HCT116 (cell line): ENCODE measurements at regions of chr14 and their contacts with region 1.

Region 1: DNA sequence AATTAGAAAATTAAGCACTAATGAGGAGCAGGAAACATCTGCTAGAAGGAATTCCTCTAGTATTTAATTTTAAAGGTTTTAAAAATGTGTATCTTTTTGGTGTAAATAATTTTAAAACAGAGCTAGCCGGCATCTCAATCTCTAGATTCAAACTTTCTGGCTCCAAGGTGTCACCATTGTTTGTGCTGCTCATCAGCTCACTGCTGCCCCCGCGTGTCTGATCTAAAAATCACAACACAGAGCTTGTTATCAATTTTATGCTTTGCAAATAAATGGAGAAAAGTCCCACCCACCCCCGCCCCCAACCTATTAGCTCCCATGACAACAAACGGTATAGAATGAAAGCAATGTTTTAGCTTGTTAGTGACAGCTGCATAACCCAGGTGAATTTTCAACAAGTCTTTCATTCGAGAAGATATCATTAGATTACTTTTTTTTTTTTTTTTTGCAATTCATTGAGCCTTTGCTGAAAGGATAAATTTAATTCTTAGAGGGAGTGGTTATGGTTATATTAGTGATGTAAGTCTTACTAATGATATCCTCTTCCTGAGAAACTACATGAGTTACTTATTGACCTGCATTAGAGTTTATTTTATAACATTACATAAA is 11.3 kb upstream of the ABHD12B start:
- DNase-seq: peak; percentile 71
- ATAC-seq: peak; percentile 73
- H3K4me3 ChIP-seq: peak overlapping the region; percentile 32 to 51
- H3K27ac ChIP-seq: no peak overlapping the region
- H3K4me1 ChIP-seq: peaks cover 7 to 12% of the 10 kb centered on the region in 2 experiments
- H3K27me3 ChIP-seq: peaks cover 5% of the 10 kb centered on the region; the same call in 1 of the 2 replicates
- CTCF ChIP-seq: peak; percentile 55 to 68 (median 58); a peak in 5 of 6 replicates
- POLR2A ChIP-seq: no peak
- RAD21 ChIP-seq: peak; percentile 67

Region 2: DNA sequence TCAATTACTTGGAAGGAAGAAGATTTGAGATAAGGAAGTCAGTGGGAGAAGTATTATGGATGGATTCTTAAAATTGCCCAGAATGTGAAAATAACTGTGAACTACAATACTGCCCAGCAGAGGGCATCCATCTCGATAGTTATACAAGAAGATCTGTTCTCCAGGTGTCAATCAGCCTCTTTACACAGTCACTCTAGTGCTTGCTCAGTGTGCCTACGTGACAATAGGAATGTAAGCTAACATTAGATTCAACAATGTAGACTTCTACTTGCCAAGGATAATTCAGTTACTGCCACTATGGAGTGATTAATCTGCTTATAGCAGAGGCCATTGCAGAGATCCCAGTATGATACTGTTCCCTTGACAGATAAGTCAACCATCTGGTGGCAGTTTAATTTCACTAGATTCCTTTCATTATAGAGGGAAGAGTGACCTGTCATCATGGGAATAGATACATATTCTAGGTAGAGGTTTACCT is 317.6 kb before region 1 on chr14:
- CTCF ChIA-PET with region 1: interaction called, 11 read pairs
- POLR2A ChIA-PET with region 1: no interaction called
- RAD21 ChIA-PET with region 1: no interaction called
- intact Hi-C with region 1: loop called (anchors 2 kb)
- DNase-seq: peak; percentile 51
- ATAC-seq: peak; percentile 96
- H3K4me3 ChIP-seq: no peak overlapping the region
- H3K27ac ChIP-seq: no peak overlapping the region
- H3K4me1 ChIP-seq: peaks cover 10 to 13% of the 10 kb centered on the region in 2 experiments
- H3K27me3 ChIP-seq: no peaks in the 10 kb centered on the region
- CTCF ChIP-seq: peak; percentile 48 to 64 (median 57); a peak in 5 of 6 replicates
- POLR2A ChIP-seq: no peak
- RAD21 ChIP-seq: peak; percentile 64

Region 3: GRCh38 chr14:50599700-50600444 is 260.7 kb before region 1 on chr14:
- CTCF ChIA-PET with region 1: interaction called, 20 read pairs
- POLR2A ChIA-PET with region 1: no interaction called
- RAD21 ChIA-PET with region 1: interaction called in 1 of 2 experiments, 3 read pairs
- intact Hi-C with region 1: loop called (anchors 1 kb)
- DNase-seq: peak; percentile 38
- ATAC-seq: peak; percentile 78
- H3K4me3 ChIP-seq: 0 out of 4 replicates have a peak overlapping the region, but pooled peaks of 1 of the 2 experiments have one; percentile 4
- H3K27ac ChIP-seq: peak overlapping the region; percentile 45; the same call in 1 of the 2 replicates
- H3K4me1 ChIP-seq: peaks cover 16 to 19% of the 10 kb centered on the region in 2 experiments
- H3K27me3 ChIP-seq: no peaks in the 10 kb centered on the region
- CTCF ChIP-seq: peak; percentile 61 to 79 (median 68); a peak in 5 of 6 replicates
- POLR2A ChIP-seq: no peak
- RAD21 ChIP-seq: peak; percentile 74

Region 4: GRCh38 chr14:50829489-50830043 is 31.0 kb before region 1 on chr14:
- CTCF ChIA-PET with region 1: interaction called, 10 read pairs
- POLR2A ChIA-PET with region 1: no interaction called
- RAD21 ChIA-PET with region 1: no interaction called
- intact Hi-C with region 1: no loop called
- DNase-seq: no peak
- ATAC-seq: no peak
- H3K4me3 ChIP-seq: peak overlapping the region; percentile 69 to 75
- H3K27ac ChIP-seq: no peak overlapping the region
- H3K4me1 ChIP-seq: peaks cover 11 to 19% of the 10 kb centered on the region in 2 experiments
- H3K27me3 ChIP-seq: 0 out of 2 replicates have a peak, but pooled peaks cover 3% of the 10 kb centered on the region
- CTCF ChIP-seq: no peak
- POLR2A ChIP-seq: no peak
- RAD21 ChIP-seq: no peak

Region 5: DNA sequence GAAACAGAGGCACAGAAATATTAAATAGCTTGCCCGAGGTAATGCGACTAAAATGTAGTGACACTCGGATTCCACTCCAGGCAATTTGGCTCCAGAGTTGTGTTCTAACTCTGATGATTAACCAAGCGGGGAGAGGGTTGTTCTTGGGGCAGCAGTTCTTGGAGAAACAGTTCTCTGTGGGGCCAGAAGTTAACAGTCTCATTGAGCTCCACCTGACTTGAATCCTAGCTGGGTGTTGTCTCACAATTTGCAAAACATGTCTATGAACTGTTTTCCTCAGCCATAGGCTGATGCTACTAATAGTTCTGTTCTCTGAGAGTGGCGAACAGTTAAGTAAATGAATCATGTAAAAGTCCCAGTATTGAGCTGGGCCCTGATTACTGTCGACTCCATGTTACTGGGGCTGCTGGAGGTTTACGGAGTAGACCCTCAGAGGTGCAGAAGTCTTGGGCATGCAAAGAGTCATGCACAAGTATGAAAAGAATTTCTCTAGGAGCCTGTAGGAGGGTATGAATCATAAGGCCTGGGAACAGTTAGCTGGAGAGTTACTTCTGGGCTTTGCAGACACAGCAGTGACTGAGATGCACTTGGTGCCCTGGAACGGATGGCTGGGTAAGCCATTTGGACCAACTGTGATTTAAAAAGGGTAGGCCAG is 14.2 kb before region 1 on chr14:
- CTCF ChIA-PET with region 1: interaction called, 16 read pairs
- POLR2A ChIA-PET with region 1: interaction called, 11 read pairs
- RAD21 ChIA-PET with region 1: no interaction called
- intact Hi-C with region 1: no loop called
- DNase-seq: no peak
- ATAC-seq: peak; percentile 27; the same call in 1 of the 2 replicates
- H3K4me3 ChIP-seq: no peak overlapping the region
- H3K27ac ChIP-seq: no peak overlapping the region
- H3K4me1 ChIP-seq: peaks cover 0 to 7% of the 10 kb centered on the region in 2 experiments; a peak in 1 of 4 replicates
- H3K27me3 ChIP-seq: no peaks in the 10 kb centered on the region
- CTCF ChIP-seq: no peak
- POLR2A ChIP-seq: no peak
- RAD21 ChIP-seq: no peak

Region 6: GRCh38 chr14:50875359-50876070 is 14.9 kb after region 1 on chr14:
- CTCF ChIA-PET with region 1: interaction called, 12 read pairs
- POLR2A ChIA-PET with region 1: no interaction called
- RAD21 ChIA-PET with region 1: no interaction called
- intact Hi-C with region 1: no loop called
- DNase-seq: no peak
- ATAC-seq: peak; percentile 27; the same call in 1 of the 2 replicates
- H3K4me3 ChIP-seq: no peak overlapping the region
- H3K27ac ChIP-seq: no peak overlapping the region
- H3K4me1 ChIP-seq: no peaks in the 10 kb centered on the region
- H3K27me3 ChIP-seq: peaks cover 3% of the 10 kb centered on the region; the same call in 1 of the 2 replicates
- CTCF ChIP-seq: no peak
- POLR2A ChIP-seq: no peak
- RAD21 ChIP-seq: no peak